AG04450 (cell line): ENCODE measurements at regions of chr19 and their contacts with region 1.

Region 1: GRCh38 chr19:41872775-41873647 is 4.1 kb upstream of the CD79A start:
- DNase-seq: no peak
- H3K4me3 ChIP-seq: no peak overlapping the region
- H3K27ac ChIP-seq: no peak overlapping the region
- H3K27me3 ChIP-seq: peaks cover 12% of the 10 kb centered on the region
- CTCF ChIP-seq: peak; percentile 74

Region 2: DNA sequence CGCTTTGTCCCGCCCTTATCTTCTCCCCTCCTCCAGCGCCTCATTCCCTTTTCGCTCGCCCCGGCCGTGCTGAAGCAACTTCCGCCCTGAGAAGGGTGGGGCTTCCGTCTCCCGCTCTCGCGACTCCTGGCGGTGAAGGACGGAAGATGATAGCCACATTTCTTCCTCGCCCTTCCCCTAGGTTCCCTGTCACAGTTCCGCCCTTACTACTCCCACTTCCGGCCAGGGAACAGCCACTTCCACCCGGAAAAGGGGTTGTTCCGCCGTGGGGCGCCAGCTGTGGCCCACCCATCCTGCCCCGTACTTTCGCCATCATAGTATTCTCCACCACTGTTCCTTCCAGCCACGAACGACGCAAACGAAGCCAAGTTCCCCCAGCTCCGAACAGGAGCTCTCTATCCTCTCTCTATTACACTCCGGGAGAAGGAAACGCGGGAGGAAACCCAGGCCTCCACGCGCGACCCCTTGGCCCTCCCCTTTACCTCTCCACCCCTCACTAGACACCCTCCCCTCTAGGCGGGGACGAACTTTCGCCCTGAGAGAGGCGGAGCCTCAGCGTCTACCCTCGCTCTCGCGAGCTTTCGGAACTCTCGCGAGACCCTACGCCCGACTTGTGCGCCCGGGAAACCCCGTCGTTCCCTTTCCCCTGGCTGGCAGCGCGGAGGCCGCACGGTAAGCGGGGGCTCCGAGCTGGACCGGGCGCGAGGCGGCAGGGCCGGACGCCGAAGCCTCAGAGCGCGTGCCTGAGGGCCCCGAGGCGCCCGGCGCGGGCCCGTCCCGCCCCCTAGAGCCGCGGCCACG is 13.2 kb before region 1 on chr19 and contains the start of gene RPS19:
- CTCF ChIA-PET with region 1: interaction called, 3 read pairs
- POLR2A ChIA-PET with region 1: interaction called, 24 read pairs
- DNase-seq: peak; percentile 96
- H3K4me3 ChIP-seq: peak within 1 kb of the TSS; percentile 99
- H3K27ac ChIP-seq: peak within 1 kb of the TSS; percentile 95
- H3K27me3 ChIP-seq: peaks cover 7% of the 10 kb centered on the region
- CTCF ChIP-seq: peak; percentile 64
- polyA plus RNA-seq, gene RPS19: 1,320 and 1,738 TPM in 2 replicates

Region 3: DNA sequence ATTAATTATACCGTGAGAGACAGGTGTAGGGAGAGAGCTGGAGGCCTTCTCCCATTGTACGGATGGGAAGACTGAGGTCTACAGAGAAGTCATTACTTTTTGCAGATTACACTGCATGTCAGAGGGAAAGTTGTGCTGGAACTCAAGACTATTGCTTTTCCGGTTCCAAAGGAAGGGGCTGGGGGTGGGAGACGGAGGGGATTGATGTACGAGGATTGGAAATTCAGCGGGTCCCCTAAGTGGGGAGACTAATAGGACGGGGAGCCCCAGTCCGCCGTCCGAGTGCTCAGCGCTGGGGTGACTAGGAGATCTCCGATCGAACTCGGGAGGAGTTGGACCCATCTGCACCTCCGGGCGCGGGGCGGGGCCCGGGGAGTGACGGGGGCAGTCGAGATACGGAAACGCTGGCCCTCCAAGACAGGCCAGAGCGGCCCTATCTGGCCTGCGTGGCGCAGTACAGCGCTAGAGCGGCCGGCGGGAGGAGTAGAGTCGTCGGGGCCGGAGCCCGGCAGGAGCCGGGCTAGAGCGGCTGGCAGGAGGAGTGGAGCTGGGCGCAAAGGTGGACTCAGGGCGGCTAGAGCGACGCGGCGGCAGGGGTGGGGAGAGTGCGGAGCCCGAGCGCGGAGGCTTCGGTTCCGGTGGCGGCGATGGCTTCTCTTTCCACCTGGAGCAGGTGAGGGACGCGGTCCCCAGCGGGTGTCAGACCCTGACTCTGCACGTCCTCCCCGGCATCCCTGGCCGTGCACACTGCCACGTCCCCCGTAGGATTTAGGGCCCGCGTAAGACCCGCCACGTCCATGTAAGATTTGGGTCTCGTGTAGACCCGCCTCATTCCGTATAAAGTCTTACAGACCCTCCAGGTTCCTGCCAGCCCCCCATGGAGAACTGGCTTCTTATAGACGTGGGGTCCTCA is 11.1 kb after region 1 on chr19:
- CTCF ChIA-PET with region 1: interaction called, 8 read pairs
- POLR2A ChIA-PET with region 1: interaction called, 16 read pairs
- DNase-seq: peak; percentile 92
- H3K4me3 ChIP-seq: peak overlapping the region; percentile 86
- H3K27ac ChIP-seq: peak overlapping the region; percentile 52
- H3K27me3 ChIP-seq: peaks cover 2% of the 10 kb centered on the region
- CTCF ChIP-seq: peak; percentile 28; the same call in 1 of the 2 replicates

Region 4: DNA sequence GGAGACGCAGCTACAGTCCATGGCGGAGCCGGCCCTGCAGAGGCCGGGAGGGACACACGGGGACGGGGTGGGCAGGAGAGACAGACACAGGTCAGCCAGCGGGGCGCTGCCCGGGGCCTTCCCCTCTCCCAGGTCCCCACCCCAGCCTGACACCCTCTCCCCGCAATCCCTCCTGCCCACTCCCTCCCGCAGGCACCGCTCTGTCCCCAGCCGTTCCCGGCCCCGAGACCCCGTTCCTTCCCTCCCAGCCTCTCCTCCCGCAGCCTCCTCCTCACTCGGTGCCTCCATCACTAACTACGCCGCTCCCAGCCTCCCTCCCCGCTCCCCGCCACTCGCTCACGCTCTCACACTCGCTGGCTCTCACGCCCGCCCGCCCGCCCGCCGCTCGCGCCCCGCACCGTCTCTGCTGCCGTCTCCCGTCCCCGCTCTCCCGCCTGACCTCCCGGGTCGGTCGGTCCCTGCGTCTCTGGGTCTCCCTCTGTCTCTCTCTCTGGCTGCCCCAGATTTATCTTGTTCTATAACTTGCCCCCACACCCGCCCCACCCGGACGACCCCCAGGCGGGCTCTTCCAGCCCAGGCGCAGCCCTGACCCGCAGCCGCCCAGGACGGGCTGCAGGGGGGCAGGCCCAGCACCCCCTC is 40.0 kb after region 1 on chr19:
- CTCF ChIA-PET with region 1: no interaction called
- POLR2A ChIA-PET with region 1: no interaction called
- DNase-seq: no peak
- H3K4me3 ChIP-seq: no peak overlapping the region
- H3K27ac ChIP-seq: no peak overlapping the region
- H3K27me3 ChIP-seq: peaks cover 67% of the 10 kb centered on the region
- CTCF ChIP-seq: no peak

Region 5: GRCh38 chr19:41951686-41952172 is 78.7 kb after region 1 on chr19:
- CTCF ChIA-PET with region 1: interaction called, 11 read pairs
- POLR2A ChIA-PET with region 1: interaction called, 9 read pairs
- DNase-seq: peak; percentile 16
- H3K4me3 ChIP-seq: 0 out of 2 replicates have a peak overlapping the region, but pooled peaks have one; percentile 22
- H3K27ac ChIP-seq: no peak overlapping the region
- H3K27me3 ChIP-seq: no peaks in the 10 kb centered on the region
- CTCF ChIP-seq: peak; percentile 96